Activated naive CD8-positive, alpha-beta T cell treated with anti-CD3 and anti-CD28 coated beads, Interleukin-2, amount 10 ng/mL, durations not matched to agents 7 days and 5 days (primary cell): ENCODE measurements at regions of chr16 and their contacts with region 1.

Region 1: DNA sequence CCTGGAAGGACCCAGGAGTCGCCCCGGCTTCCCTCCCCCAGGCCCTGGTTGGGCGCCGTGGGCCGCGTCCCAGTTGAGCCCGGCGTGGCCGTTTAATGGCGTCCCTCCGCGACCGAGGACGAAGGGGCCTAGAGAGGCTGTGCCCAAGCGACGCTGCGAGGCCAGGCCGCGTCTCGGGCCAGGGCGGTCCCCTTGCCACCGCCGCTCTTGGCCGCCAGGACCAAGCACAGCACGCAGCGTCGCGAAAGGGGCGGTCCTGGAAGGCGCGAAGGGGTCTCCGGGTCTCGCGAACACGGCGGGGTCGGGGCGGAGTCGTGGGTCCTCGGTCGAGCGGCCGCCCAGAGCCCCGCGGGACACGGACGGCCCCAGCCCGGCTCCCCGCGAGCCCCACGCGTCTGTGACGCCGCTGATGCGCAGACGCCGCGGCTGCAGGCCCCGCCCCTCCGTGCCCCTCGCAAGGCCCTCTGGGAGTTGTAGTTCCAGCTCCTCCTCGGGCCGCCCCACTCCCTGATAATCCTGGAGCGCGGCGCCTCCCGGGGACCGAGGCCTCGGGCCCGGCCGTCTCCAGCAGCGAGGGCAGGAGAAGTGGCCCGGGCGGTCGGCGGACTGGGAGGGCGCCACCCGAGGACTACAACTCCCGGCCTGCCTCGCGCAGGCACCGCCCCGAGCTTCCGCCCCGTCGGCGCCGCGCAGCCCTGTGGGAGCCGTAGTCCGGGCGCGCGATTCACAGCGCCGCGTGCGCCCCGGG is at the start of gene CAPN15:
- DNase-seq: peak; percentile 92
- ATAC-seq: peak; percentile 80
- H3K4me3 Mint-ChIP-seq: peak within 1 kb of the TSS; percentile 91
- H3K27ac Mint-ChIP-seq: peak within 1 kb of the TSS; percentile 95
- H3K4me1 Mint-ChIP-seq: peaks cover 13% of the 10 kb centered on the region
- H3K27me3 Mint-ChIP-seq: no peaks in the 10 kb centered on the region
- total RNA-seq, gene CAPN15: 83.5 to 87.4 TPM

Region 2: GRCh38 chr16:106623-107324 is 420.4 kb before region 1 on chr16:
- POLR2A ChIA-PET with region 1: no interaction called
- DNase-seq: no peak
- ATAC-seq: peak; percentile 74
- H3K4me3 Mint-ChIP-seq: no peak overlapping the region
- H3K27ac Mint-ChIP-seq: no peak overlapping the region
- H3K4me1 Mint-ChIP-seq: no peaks in the 10 kb centered on the region
- H3K27me3 Mint-ChIP-seq: no peaks in the 10 kb centered on the region

Region 3: DNA sequence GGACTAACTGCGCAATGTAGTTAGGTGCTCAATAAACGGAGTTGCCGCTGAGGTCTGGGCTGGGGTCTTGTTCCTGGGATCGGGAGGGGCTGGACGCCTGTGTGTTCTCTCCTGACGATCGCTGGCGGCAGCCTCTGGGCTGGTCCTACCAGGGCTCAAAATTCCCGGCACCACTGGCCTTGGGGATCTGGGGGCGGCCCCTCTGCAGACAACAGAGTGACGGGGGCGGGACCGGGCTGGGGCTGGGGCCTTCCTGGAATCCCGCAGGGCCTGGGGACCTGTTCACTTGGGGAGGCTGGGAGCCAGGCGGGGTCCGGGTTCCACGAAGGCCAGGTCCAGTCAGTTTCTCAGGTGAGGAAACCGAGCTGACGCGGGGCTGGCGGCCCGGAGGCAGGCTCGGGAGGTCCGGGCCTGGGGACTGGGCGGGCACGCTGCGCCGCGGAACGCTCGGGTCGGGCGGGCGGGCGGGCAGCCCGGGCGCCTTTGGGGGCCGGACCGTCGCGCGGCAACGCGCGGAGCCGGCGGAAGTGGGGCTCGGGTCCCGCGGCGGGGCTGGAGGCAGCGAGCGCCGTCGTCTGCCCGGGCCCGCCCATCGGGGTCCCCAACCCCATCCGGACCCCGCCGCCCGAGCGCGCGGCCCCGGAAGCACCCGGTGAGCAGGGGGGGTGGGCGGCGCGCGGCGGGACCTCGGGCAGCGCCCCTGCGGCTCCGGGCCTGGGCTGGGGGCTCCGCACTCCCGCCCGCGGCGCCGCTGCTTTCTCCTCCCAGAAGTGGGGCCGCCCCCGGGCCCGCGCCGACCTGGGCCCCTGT is 42.5 kb after region 1 on chr16 and contains the start of gene PIGQ:
- POLR2A ChIA-PET with region 1: interaction called, 23 read pairs
- DNase-seq: peak; percentile 83
- ATAC-seq: peak; percentile 72
- H3K4me3 Mint-ChIP-seq: peak within 1 kb of the TSS; percentile 89
- H3K27ac Mint-ChIP-seq: peak within 1 kb of the TSS; percentile 89
- H3K4me1 Mint-ChIP-seq: peaks cover 24% of the 10 kb centered on the region
- H3K27me3 Mint-ChIP-seq: no peaks in the 10 kb centered on the region
- total RNA-seq, gene PIGQ: 46.3 to 54.3 TPM

Region 4: GRCh38 chr16:582218-582613 is 55.0 kb after region 1 on chr16:
- POLR2A ChIA-PET with region 1: no interaction called
- DNase-seq: no peak
- ATAC-seq: no peak
- H3K4me3 Mint-ChIP-seq: no peak overlapping the region
- H3K27ac Mint-ChIP-seq: no peak overlapping the region
- H3K4me1 Mint-ChIP-seq: peaks cover 3% of the 10 kb centered on the region
- H3K27me3 Mint-ChIP-seq: no peaks in the 10 kb centered on the region